HCT116 (cell line): ENCODE measurements at regions of chr9 and their contacts with region 1.

Region 1: GRCh38 chr9:93827545-93828330 is 127.4 kb downstream of the BARX1 start:
- DNase-seq: no peak
- ATAC-seq: peak; percentile 96
- H3K4me3 ChIP-seq: no peak overlapping the region
- H3K27ac ChIP-seq: no peak overlapping the region
- H3K4me1 ChIP-seq: peaks cover 0 to 12% of the 10 kb centered on the region in 2 experiments; a peak in 2 of 4 replicates
- H3K27me3 ChIP-seq: no peaks in the 10 kb centered on the region
- CTCF ChIP-seq: peak; percentile 31 to 98 (median 84); a peak in 5 of 6 replicates
- POLR2A ChIP-seq: no peak
- RAD21 ChIP-seq: peak; percentile 39; the same call in 1 of the 2 replicates

Region 2: DNA sequence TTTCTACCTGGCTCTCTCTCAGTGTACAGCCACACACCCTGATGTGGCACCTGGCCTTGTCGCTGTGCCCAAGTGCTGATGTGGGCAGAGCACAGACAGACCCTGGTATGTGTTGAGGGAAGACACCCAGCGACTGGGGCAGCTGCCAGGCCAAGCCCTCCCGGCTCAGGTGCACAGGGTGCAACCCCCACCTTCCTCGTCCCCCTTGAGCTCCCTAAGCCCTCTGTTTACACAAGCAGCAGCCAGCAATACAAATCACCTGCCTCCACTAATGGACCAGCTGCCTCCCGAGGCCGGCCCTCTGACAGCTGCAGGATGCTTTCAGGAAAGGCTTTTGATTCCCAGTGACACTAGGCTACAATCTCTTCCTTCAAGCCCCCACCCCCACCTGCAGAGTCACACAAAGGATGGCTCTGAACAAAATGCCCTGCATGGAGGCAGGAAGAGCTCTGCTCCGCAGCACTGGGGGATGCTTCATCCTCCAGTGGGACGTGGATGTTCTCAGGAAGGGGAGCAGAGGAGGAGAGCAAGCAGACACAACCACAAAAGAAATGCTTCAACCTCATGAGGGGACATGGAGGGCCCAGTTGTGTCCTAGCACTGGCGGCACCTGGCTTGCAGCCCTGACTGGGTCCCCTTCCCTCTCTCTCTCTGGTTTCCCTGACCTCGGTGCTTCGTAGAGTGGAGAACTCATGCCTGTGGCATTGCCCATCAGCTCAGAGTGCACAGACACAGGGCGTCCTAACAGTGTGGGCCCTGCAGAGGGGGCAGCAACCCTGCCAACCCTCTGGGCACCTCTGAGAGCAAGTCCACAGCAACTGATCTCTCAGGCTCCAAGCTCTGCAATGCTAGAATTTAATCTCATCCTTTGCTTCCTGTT is 13.4 kb before region 1 on chr9:
- CTCF ChIA-PET with region 1: interaction called, 13 read pairs
- POLR2A ChIA-PET with region 1: no interaction called
- RAD21 ChIA-PET with region 1: no interaction called
- intact Hi-C with region 1: no loop called
- DNase-seq: no peak
- ATAC-seq: peak; percentile 77
- H3K4me3 ChIP-seq: no peak overlapping the region
- H3K27ac ChIP-seq: no peak overlapping the region
- H3K4me1 ChIP-seq: peaks cover 6 to 8% of the 10 kb centered on the region in 2 experiments
- H3K27me3 ChIP-seq: peaks cover 18% of the 10 kb centered on the region
- CTCF ChIP-seq: peak; percentile 18 to 44 (median 35); a peak in 3 of 6 replicates
- POLR2A ChIP-seq: no peak
- RAD21 ChIP-seq: peak; percentile 47; the same call in 1 of the 2 replicates

Region 3: DNA sequence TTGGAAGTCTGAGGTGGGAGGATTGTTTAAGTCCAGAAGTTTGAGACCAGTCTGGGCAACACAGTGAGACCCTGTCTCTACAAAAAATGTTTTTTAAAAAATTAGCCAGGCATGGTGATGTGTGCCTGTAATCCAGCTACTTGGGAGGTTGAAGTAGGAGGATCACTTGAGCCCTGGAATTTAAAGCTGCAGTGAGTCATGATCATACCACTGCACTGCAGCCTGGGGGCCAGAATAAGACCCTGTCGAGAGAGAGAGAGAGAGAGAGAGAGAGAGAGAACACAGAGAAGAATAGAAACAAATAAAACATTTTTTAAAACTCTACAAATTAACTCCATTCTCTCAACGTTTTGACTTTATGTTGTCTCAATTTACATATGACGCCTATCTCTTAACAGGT is 15.7 kb after region 1 on chr9:
- CTCF ChIA-PET with region 1: interaction called, 11 read pairs
- POLR2A ChIA-PET with region 1: no interaction called
- RAD21 ChIA-PET with region 1: no interaction called
- intact Hi-C with region 1: no loop called
- DNase-seq: no peak
- ATAC-seq: no peak
- H3K4me3 ChIP-seq: no peak overlapping the region
- H3K27ac ChIP-seq: no peak overlapping the region
- H3K4me1 ChIP-seq: no peaks in the 10 kb centered on the region
- H3K27me3 ChIP-seq: peaks cover 14% of the 10 kb centered on the region; the same call in 1 of the 2 replicates
- CTCF ChIP-seq: no peak
- POLR2A ChIP-seq: no peak
- RAD21 ChIP-seq: no peak

Region 4: DNA sequence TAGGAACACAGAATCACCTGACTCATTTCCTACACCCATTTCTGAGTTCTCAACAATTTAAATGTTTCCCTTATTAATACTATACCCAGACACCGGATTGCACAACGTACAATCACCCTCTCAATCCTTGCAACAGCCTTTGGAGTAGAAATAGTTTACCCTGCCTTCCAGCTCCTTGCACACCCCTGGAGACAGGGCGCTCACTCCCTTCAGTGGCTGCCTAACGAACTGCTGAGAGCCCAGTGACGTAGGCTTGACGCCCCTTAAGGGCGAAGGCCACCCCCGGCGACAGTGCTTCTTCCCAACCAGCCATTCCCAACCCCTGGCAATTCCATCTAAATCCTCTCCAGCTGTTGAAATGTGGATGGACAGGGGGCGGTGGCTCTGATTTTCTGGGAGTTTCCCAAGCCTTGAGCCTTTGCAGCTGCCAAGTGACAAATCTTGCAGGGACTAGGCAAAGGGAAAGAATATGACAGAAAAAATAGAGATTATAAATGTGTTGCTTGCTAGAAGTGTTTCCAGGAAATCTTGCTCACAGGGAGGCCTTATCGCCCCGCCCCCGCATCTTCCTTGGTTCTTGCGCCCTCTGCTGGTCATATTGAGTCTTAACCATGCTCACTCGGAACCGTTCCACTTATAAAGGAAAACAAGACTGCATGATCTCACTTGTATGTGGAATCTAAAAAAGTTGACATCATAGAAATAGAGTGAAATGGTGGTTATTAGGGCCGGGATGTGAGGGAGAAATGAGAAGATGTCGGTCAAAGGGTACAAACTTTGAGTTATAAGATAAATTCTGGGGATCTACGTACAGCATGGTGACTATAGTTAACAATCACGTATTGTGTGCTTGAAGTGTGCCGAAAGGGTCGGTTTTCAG is 135.1 kb after region 1 on chr9:
- CTCF ChIA-PET with region 1: interaction called, 4 read pairs
- POLR2A ChIA-PET with region 1: no interaction called
- RAD21 ChIA-PET with region 1: interaction called in 1 of 2 experiments, 3 read pairs
- intact Hi-C with region 1: loop called (anchors 2 kb)
- DNase-seq: peak; percentile 70
- ATAC-seq: peak; percentile 90
- H3K4me3 ChIP-seq: no peak overlapping the region
- H3K27ac ChIP-seq: no peak overlapping the region
- H3K4me1 ChIP-seq: peaks cover 0 to 6% of the 10 kb centered on the region in 2 experiments; a peak in 1 of 4 replicates
- H3K27me3 ChIP-seq: no peaks in the 10 kb centered on the region
- CTCF ChIP-seq: peak; percentile 68 to 90 (median 89)
- POLR2A ChIP-seq: no peak
- RAD21 ChIP-seq: peak; percentile 85

Region 5: GRCh38 chr9:94026816-94027215 is 199.1 kb after region 1 on chr9:
- CTCF ChIA-PET with region 1: no interaction called
- POLR2A ChIA-PET with region 1: no interaction called
- RAD21 ChIA-PET with region 1: no interaction called
- intact Hi-C with region 1: no loop called
- DNase-seq: no peak
- ATAC-seq: no peak
- H3K4me3 ChIP-seq: no peak overlapping the region
- H3K27ac ChIP-seq: no peak overlapping the region
- H3K4me1 ChIP-seq: peaks cover 5 to 18% of the 10 kb centered on the region in 2 experiments; a peak in 3 of 4 replicates
- H3K27me3 ChIP-seq: no peaks in the 10 kb centered on the region
- CTCF ChIP-seq: no peak
- POLR2A ChIP-seq: no peak
- RAD21 ChIP-seq: no peak

Region 6: DNA sequence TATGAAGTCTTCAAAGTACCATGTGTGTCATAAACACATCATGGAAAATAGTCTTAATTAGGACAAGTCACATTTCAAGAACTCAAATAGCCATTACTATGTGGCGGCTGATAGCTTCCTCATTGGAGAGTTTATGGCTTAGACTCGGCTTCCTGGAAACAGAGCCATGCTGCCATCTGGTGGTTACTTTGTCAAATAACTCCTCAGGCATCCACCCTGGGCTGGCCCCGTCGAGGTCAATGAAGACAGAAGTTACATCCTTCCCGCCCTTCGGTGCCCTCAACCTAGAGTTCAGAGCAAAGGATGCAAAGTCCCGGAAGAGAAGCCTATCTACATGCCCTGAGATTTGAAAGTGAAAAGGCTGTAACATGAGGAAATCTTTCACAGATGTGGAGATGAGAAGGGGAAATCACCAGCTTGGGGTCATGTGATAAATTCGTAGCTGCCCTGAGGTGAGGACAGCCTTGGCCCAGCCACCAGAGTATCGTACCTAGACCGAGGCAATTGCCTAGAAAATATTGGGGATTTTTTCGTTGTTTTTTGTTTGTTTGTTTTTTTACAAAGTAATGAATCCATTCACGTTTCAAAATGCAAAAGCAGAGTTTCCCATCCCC is 385.9 kb after region 1 on chr9:
- CTCF ChIA-PET with region 1: no interaction called
- POLR2A ChIA-PET with region 1: no interaction called
- RAD21 ChIA-PET with region 1: no interaction called
- intact Hi-C with region 1: no loop called
- DNase-seq: peak; percentile 71
- ATAC-seq: peak; percentile 99
- H3K4me3 ChIP-seq: no peak overlapping the region
- H3K27ac ChIP-seq: no peak overlapping the region
- H3K4me1 ChIP-seq: no peaks in the 10 kb centered on the region
- H3K27me3 ChIP-seq: no peaks in the 10 kb centered on the region
- CTCF ChIP-seq: peak; percentile 61 to 94 (median 80)
- POLR2A ChIP-seq: no peak
- RAD21 ChIP-seq: peak; percentile 98